ENCODE measurements at regions of chr10 and their contacts with region 1.

Region 1: GRCh38 chr10:93509816-93510215 is 13.4 kb downstream of the CEP55 start:
- DNase-seq: no peak
- H3K4me3 Mint-ChIP-seq: no peak overlapping the region
- H3K27ac Mint-ChIP-seq: no peak overlapping the region
- H3K4me1 Mint-ChIP-seq: no peaks in the 10 kb centered on the region
- H3K27me3 Mint-ChIP-seq: no peaks in the 10 kb centered on the region
- CTCF ChIP-seq: no peak

Region 2: GRCh38 chr10:93488956-93489528 is 20.8 kb before region 1 on chr10:
- CTCF ChIA-PET with region 1: interaction called, 27 read pairs
- POLR2A ChIA-PET with region 1: interaction called, 3 read pairs
- intact Hi-C with region 1: no loop called
- DNase-seq: no peak
- H3K4me3 Mint-ChIP-seq: no peak overlapping the region
- H3K27ac Mint-ChIP-seq: no peak overlapping the region
- H3K4me1 Mint-ChIP-seq: no peaks in the 10 kb centered on the region
- H3K27me3 Mint-ChIP-seq: no peaks in the 10 kb centered on the region
- CTCF ChIP-seq: no peak